ENCODE measurements at regions of chr2 and their contacts with region 1.

Region 1: GRCh38 chr2:75608684-75609333 is 37.8 kb upstream of the MRPL19 start:
- DNase-seq: peak; percentile 79
- CTCF ChIP-seq: peak; percentile 94

Region 2: GRCh38 chr2:73859721-73860586 is 1748.9 kb before region 1 on chr2:
- in situ Hi-C with region 1: no loop called
- DNase-seq: no peak
- CTCF ChIP-seq: no peak

Region 3: GRCh38 chr2:74919827-74920226 is 689.0 kb before region 1 on chr2:
- in situ Hi-C with region 1: loop called (anchors 25 kb)
- DNase-seq: peak; percentile 81
- CTCF ChIP-seq: peak; percentile 88

Region 4: GRCh38 chr2:75064691-75065396 is 544.0 kb before region 1 on chr2:
- in situ Hi-C with region 1: loop called (anchors 25 kb)
- DNase-seq: peak; percentile 44
- CTCF ChIP-seq: peak; percentile 89

Region 5: DNA sequence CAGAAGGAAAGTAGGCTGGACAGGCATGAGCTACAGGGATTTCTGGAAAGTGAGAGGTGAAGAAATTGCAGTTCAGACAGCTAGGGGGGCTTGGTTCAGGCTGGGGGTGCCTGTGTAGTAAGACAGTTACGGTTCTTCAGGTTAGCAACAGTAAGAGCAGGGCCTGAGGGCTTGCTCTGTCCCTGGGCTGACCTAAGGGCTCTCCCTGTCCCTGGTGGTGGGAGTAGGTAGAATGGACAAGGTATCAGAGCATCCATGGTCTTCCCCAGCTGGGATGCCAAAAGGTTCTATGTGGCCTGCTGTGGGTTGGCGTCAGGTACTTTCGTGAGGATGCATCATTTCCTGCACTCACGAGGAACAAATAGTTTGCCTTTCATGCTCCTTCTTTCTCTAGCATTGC is 374.8 kb before region 1 on chr2:
- in situ Hi-C with region 1: no loop called
- DNase-seq: no peak
- CTCF ChIP-seq: no peak

Region 6: DNA sequence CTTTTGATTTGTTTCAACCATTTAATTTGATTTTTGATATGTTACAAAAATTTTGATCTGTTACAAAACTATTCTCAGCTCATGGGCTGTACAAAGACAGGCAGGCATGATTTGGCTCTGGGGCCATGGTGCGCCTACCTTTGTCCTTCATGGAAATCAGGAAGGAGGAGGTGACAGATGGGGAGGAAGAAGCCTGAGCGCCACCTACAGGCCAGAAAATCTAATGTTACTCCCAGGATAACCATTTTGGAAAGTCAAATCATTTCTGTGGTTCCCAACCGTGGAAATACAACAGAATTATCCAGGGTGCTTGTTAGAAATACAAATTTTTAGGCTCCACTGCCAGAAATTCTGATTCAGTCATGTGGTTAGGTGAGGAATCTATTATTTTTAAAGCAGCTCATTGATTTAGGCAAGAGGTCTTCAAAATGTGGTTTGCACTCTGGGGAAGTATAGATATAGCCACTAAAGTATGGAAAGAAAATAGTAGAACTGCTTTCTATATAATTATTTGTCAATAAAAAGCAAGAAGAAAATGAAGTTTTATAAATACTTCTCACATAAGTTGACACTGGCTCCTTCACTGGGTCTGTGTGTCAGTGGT is 142.0 kb before region 1 on chr2:
- in situ Hi-C with region 1: loop called (anchors 25 kb)
- DNase-seq: peak; percentile 17
- CTCF ChIP-seq: peak; percentile 71